ENCODE measurements at regions of chr17 and their contacts with region 1.

Region 1: DNA sequence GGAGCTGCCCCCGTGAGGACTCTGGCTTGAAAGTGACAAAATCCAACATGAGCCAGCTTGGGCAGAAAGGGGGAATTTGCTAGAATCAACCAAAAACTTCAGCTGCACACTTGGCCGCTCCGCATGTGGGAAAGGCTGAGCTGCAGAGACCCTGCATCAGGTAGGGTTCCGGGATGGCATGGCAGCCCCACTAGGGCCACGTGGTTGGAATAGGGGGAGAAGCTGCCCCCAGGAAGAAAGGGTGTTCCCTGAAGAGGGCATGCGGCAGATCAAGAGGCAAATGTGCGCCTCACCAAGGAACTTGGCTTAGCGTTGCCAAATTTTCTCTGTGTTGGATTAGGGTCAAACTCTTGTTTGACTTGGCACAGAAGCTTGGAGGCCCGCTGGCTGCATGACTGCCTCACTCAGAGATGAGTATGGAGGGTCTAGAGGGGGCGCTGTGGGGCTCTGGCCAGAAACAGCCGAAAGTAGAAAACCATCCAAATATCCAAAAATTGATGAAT is 29.2 kb upstream of the WFIKKN2 start:
- H3K4me3 Mint-ChIP-seq: no peak overlapping the region
- H3K27ac Mint-ChIP-seq: no peak overlapping the region
- H3K4me1 Mint-ChIP-seq: no peaks in the 10 kb centered on the region
- H3K27me3 Mint-ChIP-seq: peaks cover 3% of the 10 kb centered on the region

Region 2: GRCh38 chr17:50589095-50589705 is 217.0 kb before region 1 on chr17:
- intact Hi-C with region 1: no loop called
- H3K4me3 Mint-ChIP-seq: no peak overlapping the region
- H3K27ac Mint-ChIP-seq: no peak overlapping the region
- H3K4me1 Mint-ChIP-seq: peaks cover 2% of the 10 kb centered on the region
- H3K27me3 Mint-ChIP-seq: peaks cover 34% of the 10 kb centered on the region

Region 3: DNA sequence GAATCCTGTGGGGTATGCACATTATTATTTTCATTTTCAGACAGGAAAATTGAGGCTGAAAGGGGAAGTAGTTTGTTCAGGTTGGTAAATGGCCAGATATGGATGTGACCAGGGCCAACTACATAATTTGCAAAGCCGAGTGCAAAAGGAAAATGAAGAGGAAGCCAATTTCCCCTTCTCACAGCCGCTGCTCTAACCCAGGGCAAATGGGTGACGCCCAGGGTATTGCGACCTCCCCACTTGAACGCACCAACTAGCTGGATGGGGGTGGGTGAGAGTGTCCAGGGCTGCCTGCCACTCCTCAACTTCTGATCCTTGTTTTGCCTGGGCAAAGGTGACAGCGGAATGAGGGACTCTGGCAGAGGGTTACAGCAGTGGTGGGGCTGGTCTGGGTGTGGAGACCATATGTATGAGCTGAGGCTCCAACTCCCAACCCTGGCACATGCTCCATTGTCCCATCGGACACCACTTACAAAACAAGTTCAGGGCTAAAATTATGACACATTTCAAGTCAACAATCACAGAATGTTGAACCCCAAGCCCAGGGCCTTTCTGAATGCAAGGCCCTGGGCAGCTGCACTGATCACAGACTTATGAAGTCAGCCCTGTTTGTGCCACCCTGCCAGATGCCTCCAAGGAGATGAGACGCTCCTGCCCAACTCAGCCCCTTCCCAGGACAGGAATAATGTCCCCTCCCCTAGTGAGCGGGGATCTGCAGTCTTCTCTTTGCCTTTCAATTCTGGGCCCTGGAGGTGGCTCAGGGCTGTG is 40.6 kb before region 1 on chr17:
- intact Hi-C with region 1: no loop called
- H3K4me3 Mint-ChIP-seq: no peak overlapping the region
- H3K27ac Mint-ChIP-seq: peak overlapping the region; percentile 63
- H3K4me1 Mint-ChIP-seq: peaks cover 29% of the 10 kb centered on the region
- H3K27me3 Mint-ChIP-seq: no peaks in the 10 kb centered on the region

Region 4: GRCh38 chr17:50841949-50842354 is 35.8 kb after region 1 on chr17:
- intact Hi-C with region 1: loop called (anchors 1 kb)
- H3K4me3 Mint-ChIP-seq: no peak overlapping the region
- H3K27ac Mint-ChIP-seq: no peak overlapping the region
- H3K4me1 Mint-ChIP-seq: peaks cover 8% of the 10 kb centered on the region
- H3K27me3 Mint-ChIP-seq: no peaks in the 10 kb centered on the region

Measured in dendritic cell treated with granulocyte-macrophage colony-stimulating factor and Interleukin-4, amounts not matched to agents 40 ng/mL and 50 ng/mL, for 4 days (primary cell).